Dendritic cell treated with granulocyte-macrophage colony-stimulating factor and Interleukin-4, amounts not matched to agents 40 ng/mL and 50 ng/mL, for 4 days (primary cell): ENCODE measurements at regions of chrX and their contacts with region 1.

Region 1: GRCh38 chrX:110992611-110993010 is 103.4 kb upstream of the PAK3 start:
- H3K4me3 Mint-ChIP-seq: no peak overlapping the region
- H3K27ac Mint-ChIP-seq: no peak overlapping the region
- H3K4me1 Mint-ChIP-seq: no peaks in the 10 kb centered on the region
- H3K27me3 Mint-ChIP-seq: peaks cover 9% of the 10 kb centered on the region

Region 2: GRCh38 chrX:110920991-110921390 is 71.6 kb before region 1 on chrX:
- intact Hi-C with region 1: no loop called
- H3K4me3 Mint-ChIP-seq: no peak overlapping the region
- H3K27ac Mint-ChIP-seq: no peak overlapping the region
- H3K4me1 Mint-ChIP-seq: no peaks in the 10 kb centered on the region
- H3K27me3 Mint-ChIP-seq: no peaks in the 10 kb centered on the region

Region 3: GRCh38 chrX:111098874-111099273 is 106.3 kb after region 1 on chrX:
- intact Hi-C with region 1: loop called (anchors 5 kb)
- H3K4me3 Mint-ChIP-seq: no peak overlapping the region
- H3K27ac Mint-ChIP-seq: no peak overlapping the region
- H3K4me1 Mint-ChIP-seq: peaks cover 11% of the 10 kb centered on the region
- H3K27me3 Mint-ChIP-seq: peaks cover 44% of the 10 kb centered on the region

Region 4: DNA sequence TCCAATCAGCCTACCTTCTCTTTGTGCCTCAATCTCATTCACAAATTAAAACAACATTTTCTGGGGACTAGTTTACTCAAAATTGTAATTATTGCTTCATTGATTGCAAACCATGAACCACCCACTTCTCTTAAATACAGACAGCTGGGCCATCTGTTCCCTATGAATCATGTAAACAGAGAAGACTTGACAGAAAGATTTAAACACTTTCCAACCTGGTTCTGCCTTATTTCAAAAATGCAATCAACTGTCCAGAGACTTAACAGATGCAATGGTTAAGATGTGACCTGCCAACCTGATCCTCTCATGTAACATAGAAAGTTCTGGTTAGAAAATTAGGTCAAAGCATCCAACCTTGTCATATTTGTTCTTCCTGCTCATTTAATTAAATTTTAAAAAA is 498.1 kb after region 1 on chrX:
- intact Hi-C with region 1: no loop called
- H3K4me3 Mint-ChIP-seq: no peak overlapping the region
- H3K27ac Mint-ChIP-seq: no peak overlapping the region
- H3K4me1 Mint-ChIP-seq: no peaks in the 10 kb centered on the region
- H3K27me3 Mint-ChIP-seq: no peaks in the 10 kb centered on the region